Activated B cell treated with CpG ODN at 0.5 μM for 24 hours (primary cell): ENCODE measurements at regions of chr7 and their contacts with region 1.

Region 1: GRCh38 chr7:134986363-134987251 is at the start of gene AGBL3:
- DNase-seq: peak; percentile 86
- ATAC-seq: peak; percentile 89
- H3K4me3 Mint-ChIP-seq: peak within 1 kb of the TSS; percentile 99
- H3K27ac Mint-ChIP-seq: peak within 1 kb of the TSS; percentile 99
- H3K4me1 Mint-ChIP-seq: peaks cover 26% of the 10 kb centered on the region
- H3K27me3 Mint-ChIP-seq: no peaks in the 10 kb centered on the region
- CTCF ChIP-seq: peak; percentile 63
- total RNA-seq, gene AGBL3: 6.1 and 9.6 TPM in 2 replicates

Region 2: DNA sequence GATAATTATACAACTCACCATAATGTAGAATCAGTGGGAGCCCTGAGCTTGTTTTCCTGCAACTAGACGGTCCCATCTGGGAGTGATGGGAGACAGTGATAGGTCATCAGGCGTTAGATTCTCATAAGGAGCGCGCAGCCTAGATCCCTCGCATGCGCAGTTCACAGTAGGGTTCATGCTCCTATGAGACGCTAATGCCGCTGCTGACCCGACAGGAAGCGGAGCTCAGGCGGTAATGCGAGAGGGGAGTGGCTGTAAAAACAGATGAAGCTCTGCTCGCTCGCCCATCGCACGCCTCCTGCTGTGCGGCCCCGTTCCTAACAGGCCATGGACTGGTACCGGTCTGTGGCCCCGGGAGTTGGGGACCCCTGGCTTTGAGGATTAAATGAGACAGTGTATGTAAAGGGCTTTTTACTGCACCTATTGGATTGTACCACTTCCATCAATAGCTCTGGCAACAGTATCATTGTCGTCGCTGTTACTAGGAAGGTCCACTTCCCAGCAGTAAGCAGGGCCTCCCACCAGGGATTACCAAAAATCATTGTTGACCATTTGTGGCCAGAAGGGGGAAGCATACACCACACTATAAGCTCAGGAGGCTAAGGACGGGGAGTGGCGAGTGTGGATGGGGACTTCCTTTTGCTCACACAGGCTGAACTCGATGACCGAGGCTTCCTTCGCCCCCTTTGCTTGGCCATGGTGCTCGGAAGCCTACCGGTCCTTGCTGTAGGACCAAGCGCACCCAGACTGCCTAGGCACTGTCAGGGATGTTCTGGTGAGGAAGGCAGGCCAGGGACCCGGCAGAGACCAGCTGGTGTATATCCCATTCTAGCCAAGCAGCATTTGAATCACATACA is 554.1 kb before region 1 on chr7:
- CTCF ChIA-PET with region 1: interaction called, 4 read pairs
- POLR2A ChIA-PET with region 1: interaction called, 4 read pairs
- intact Hi-C with region 1: loop called (anchors 10 kb)
- DNase-seq: peak; percentile 56
- ATAC-seq: peak; percentile 89
- H3K4me3 Mint-ChIP-seq: peak overlapping the region; percentile 82
- H3K27ac Mint-ChIP-seq: peak overlapping the region; percentile 82
- H3K4me1 Mint-ChIP-seq: peaks cover 20% of the 10 kb centered on the region
- H3K27me3 Mint-ChIP-seq: no peaks in the 10 kb centered on the region
- CTCF ChIP-seq: no peak

Region 3: GRCh38 chr7:135147899-135148721 is 161.5 kb after region 1 on chr7 and contains the start of gene TMEM140:
- CTCF ChIA-PET with region 1: interaction called, 8 read pairs
- POLR2A ChIA-PET with region 1: interaction called, 44 read pairs
- intact Hi-C with region 1: loop called (anchors 2 kb)
- DNase-seq: no peak
- ATAC-seq: peak; percentile 72
- H3K4me3 Mint-ChIP-seq: peak within 1 kb of the TSS; percentile 83
- H3K27ac Mint-ChIP-seq: peak within 1 kb of the TSS; percentile 93
- H3K4me1 Mint-ChIP-seq: peaks cover 73% of the 10 kb centered on the region
- H3K27me3 Mint-ChIP-seq: no peaks in the 10 kb centered on the region
- CTCF ChIP-seq: no peak
- total RNA-seq, gene TMEM140: 18.6 and 20.9 TPM in 2 replicates

Region 4: GRCh38 chr7:135170274-135170997 is 183.8 kb after region 1 on chr7 and contains the start of gene CYREN:
- CTCF ChIA-PET with region 1: interaction called, 51 read pairs
- POLR2A ChIA-PET with region 1: interaction called, 68 read pairs
- intact Hi-C with region 1: loop called (anchors 1 kb)
- DNase-seq: peak; percentile 85
- ATAC-seq: peak; percentile 76
- H3K4me3 Mint-ChIP-seq: peak within 1 kb of the TSS; percentile 92
- H3K27ac Mint-ChIP-seq: peak within 1 kb of the TSS; percentile 95
- H3K4me1 Mint-ChIP-seq: peaks cover 59% of the 10 kb centered on the region
- H3K27me3 Mint-ChIP-seq: no peaks in the 10 kb centered on the region
- CTCF ChIP-seq: no peak
- total RNA-seq, gene CYREN: 78.2 and 79.3 TPM in 2 replicates

Region 5: GRCh38 chr7:135211179-135211945 is 224.8 kb after region 1 on chr7 and contains the start of gene WDR91:
- CTCF ChIA-PET with region 1: no interaction called
- POLR2A ChIA-PET with region 1: interaction called, 9 read pairs
- intact Hi-C with region 1: loop called (anchors 2 kb)
- DNase-seq: peak; percentile 87
- ATAC-seq: peak; percentile 92
- H3K4me3 Mint-ChIP-seq: peak within 1 kb of the TSS; percentile 97
- H3K27ac Mint-ChIP-seq: peak within 1 kb of the TSS; percentile 97
- H3K4me1 Mint-ChIP-seq: peaks cover 40% of the 10 kb centered on the region
- H3K27me3 Mint-ChIP-seq: no peaks in the 10 kb centered on the region
- CTCF ChIP-seq: no peak
- total RNA-seq, gene WDR91: 59.5 and 60.1 TPM in 2 replicates

Region 6: GRCh38 chr7:135509903-135510602 is 523.4 kb after region 1 on chr7 and contains the start of gene CNOT4:
- CTCF ChIA-PET with region 1: no interaction called
- POLR2A ChIA-PET with region 1: no interaction called
- intact Hi-C with region 1: loop called (anchors 2 kb)
- DNase-seq: peak; percentile 87
- ATAC-seq: peak; percentile 96
- H3K4me3 Mint-ChIP-seq: no peak within 1 kb of the TSS
- H3K27ac Mint-ChIP-seq: no peak within 1 kb of the TSS
- H3K4me1 Mint-ChIP-seq: peaks cover 10% of the 10 kb centered on the region
- H3K27me3 Mint-ChIP-seq: no peaks in the 10 kb centered on the region
- CTCF ChIP-seq: no peak
- total RNA-seq, gene CNOT4: 34.4 and 36.8 TPM in 2 replicates

Region 7: GRCh38 chr7:135662373-135663114 is 675.9 kb after region 1 on chr7 and contains the start of gene STMP1:
- CTCF ChIA-PET with region 1: no interaction called
- POLR2A ChIA-PET with region 1: no interaction called
- intact Hi-C with region 1: loop called (anchors 5 kb)
- DNase-seq: peak; percentile 96
- ATAC-seq: peak; percentile 98
- H3K4me3 Mint-ChIP-seq: peak within 1 kb of the TSS; percentile 91
- H3K27ac Mint-ChIP-seq: peak within 1 kb of the TSS; percentile 79
- H3K4me1 Mint-ChIP-seq: peaks cover 39% of the 10 kb centered on the region
- H3K27me3 Mint-ChIP-seq: no peaks in the 10 kb centered on the region
- CTCF ChIP-seq: no peak
- total RNA-seq, gene STMP1: 24.2 and 26.2 TPM in 2 replicates